ENCODE measurements at regions of chr1 and their contacts with region 1.

Region 1: GRCh38 chr1:155227261-155228095 is 19.0 kb downstream of the MTX1 start:
- DNase-seq: peak; percentile 93 to 97
- H3K4me3 ChIP-seq: peak overlapping the region; percentile 81
- H3K27ac ChIP-seq: peak overlapping the region; percentile 98
- H3K4me1 ChIP-seq: peaks cover 41% of the 10 kb centered on the region
- H3K27me3 ChIP-seq: no peaks in the 10 kb centered on the region
- CTCF ChIP-seq: no peak; the same call in 1 of the 2 replicates

Region 2: DNA sequence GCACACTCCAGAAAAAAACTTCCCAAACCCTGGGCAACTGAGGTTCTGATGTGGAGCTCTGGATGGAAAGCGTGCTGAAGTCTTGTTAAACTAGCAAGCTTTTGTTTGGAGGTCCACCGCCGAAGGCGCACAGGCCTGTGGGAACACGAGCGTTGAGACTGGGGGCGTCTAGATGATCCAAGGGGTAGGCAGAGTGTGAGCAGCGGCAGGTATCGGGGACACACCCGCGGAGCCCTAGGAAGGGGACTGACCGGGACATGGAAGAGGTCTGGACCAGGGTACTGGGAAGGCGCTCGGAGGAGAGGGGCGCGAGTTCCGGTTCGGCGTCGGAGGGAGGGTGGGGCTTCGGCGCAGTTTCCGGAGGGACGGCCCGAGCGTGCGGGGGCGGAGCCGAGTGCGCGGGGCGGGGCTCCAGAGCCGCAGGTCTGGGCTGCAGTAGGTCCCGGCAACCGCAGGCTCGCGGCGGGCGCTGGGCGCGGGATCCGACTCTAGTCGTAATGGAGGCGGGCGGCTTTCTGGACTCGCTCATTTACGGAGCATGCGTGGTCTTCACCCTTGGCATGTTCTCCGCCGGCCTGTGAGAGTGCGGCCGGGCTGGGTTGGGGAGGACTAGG is 92.0 kb before region 1 on chr1 and contains the start of gene SLC50A1:
- CTCF ChIA-PET with region 1: no interaction called
- POLR2A ChIA-PET with region 1: no interaction called
- intact Hi-C with region 1: loop called (anchors 1 kb)
- DNase-seq: peak; percentile 80 to 94
- H3K4me3 ChIP-seq: peak within 1 kb of the TSS; percentile 78
- H3K27ac ChIP-seq: peak within 1 kb of the TSS; percentile 99
- H3K4me1 ChIP-seq: peaks cover 54% of the 10 kb centered on the region
- H3K27me3 ChIP-seq: no peaks in the 10 kb centered on the region
- CTCF ChIP-seq: 0 out of 2 replicates have a peak, but pooled peaks have one; percentile 15
- total RNA-seq, gene SLC50A1: 54.9 and 67.6 TPM in 2 replicates

Region 3: GRCh38 chr1:155193275-155193990 is 34.0 kb before region 1 on chr1:
- CTCF ChIA-PET with region 1: no interaction called
- POLR2A ChIA-PET with region 1: interaction called, 9 read pairs
- intact Hi-C with region 1: loop called (anchors 5 kb)
- DNase-seq: peak; percentile 79 to 96
- H3K4me3 ChIP-seq: peak overlapping the region; percentile 73
- H3K27ac ChIP-seq: peak overlapping the region; percentile 59
- H3K4me1 ChIP-seq: peaks cover 14% of the 10 kb centered on the region
- H3K27me3 ChIP-seq: no peaks in the 10 kb centered on the region
- CTCF ChIP-seq: peak; percentile 97

Region 4: DNA sequence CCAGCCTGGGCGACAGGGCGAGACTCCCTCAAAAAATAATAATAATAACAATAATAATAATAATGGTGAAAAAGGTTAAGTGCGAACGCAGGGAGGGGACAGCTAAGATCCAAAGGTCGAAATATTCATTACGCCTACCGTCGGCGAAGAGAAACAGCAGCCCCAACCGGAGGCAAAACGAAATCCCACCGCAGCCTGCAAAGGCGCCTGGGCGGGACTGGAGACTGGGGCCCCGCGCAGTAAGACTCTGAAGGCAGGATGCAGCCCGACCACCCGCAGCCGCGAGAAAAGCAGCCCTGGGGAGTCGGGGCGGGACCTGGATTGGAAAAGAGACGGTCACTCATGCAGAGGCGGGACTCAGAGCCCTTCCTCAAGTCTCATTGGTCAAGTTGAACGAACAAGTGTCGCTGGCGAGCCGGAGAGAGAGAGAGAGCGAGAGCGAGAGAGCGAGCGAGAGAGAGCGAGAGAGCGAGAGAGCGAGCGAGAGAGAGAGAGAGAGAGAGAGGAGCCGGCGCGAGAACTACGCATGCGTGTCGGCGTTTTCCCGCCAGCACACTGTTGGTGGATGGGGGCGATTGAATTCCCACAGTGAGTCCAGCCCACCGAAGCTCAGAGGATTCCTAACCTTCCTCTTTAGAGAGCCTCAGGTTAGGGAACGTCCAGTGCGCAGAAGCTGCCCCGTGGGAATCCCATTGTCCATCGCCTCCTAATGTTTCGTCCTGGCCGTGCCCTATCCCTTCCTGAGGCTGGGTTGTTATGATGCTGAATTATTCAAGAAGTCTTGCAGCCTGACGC is 17.1 kb after region 1 on chr1:
- CTCF ChIA-PET with region 1: interaction called, 3 read pairs
- POLR2A ChIA-PET with region 1: interaction called, 11 read pairs
- intact Hi-C with region 1: no loop called
- DNase-seq: peak; percentile 94 to 96
- H3K4me3 ChIP-seq: peak overlapping the region; percentile 75
- H3K27ac ChIP-seq: peak overlapping the region; percentile 72
- H3K4me1 ChIP-seq: peaks cover 26% of the 10 kb centered on the region
- H3K27me3 ChIP-seq: no peaks in the 10 kb centered on the region
- CTCF ChIP-seq: peak; percentile 91